IMR-90 (cell line): ENCODE measurements at regions of chr22 and their contacts with region 1.

Region 1: GRCh38 chr22:32175683-32176644 is 16.9 kb upstream of the C22orf42 start:
- DNase-seq: no peak
- ATAC-seq: no peak
- H3K4me3 ChIP-seq: no peak overlapping the region
- H3K27ac ChIP-seq: no peak overlapping the region
- H3K4me1 ChIP-seq: no peaks in the 10 kb centered on the region
- H3K27me3 ChIP-seq: peaks cover 3% of the 10 kb centered on the region; the same call in 1 of the 2 replicates
- CTCF ChIP-seq: no peak
- POLR2A ChIP-seq: no peak
- RAD21 ChIP-seq: no peak

Region 2: GRCh38 chr22:32396746-32397145 is 220.8 kb after region 1 on chr22:
- CTCF ChIA-PET with region 1: no interaction called
- POLR2A ChIA-PET with region 1: interaction called, 14 read pairs
- dilution Hi-C with region 1: no loop called
- in situ Hi-C with region 1: no loop called
- intact Hi-C with region 1: no loop called
- DNase-seq: no peak
- ATAC-seq: no peak
- H3K4me3 ChIP-seq: no peak overlapping the region
- H3K27ac ChIP-seq: no peak overlapping the region
- H3K4me1 ChIP-seq: no peaks in the 10 kb centered on the region
- H3K27me3 ChIP-seq: no peaks in the 10 kb centered on the region
- CTCF ChIP-seq: no peak
- POLR2A ChIP-seq: no peak
- RAD21 ChIP-seq: no peak

Region 3: DNA sequence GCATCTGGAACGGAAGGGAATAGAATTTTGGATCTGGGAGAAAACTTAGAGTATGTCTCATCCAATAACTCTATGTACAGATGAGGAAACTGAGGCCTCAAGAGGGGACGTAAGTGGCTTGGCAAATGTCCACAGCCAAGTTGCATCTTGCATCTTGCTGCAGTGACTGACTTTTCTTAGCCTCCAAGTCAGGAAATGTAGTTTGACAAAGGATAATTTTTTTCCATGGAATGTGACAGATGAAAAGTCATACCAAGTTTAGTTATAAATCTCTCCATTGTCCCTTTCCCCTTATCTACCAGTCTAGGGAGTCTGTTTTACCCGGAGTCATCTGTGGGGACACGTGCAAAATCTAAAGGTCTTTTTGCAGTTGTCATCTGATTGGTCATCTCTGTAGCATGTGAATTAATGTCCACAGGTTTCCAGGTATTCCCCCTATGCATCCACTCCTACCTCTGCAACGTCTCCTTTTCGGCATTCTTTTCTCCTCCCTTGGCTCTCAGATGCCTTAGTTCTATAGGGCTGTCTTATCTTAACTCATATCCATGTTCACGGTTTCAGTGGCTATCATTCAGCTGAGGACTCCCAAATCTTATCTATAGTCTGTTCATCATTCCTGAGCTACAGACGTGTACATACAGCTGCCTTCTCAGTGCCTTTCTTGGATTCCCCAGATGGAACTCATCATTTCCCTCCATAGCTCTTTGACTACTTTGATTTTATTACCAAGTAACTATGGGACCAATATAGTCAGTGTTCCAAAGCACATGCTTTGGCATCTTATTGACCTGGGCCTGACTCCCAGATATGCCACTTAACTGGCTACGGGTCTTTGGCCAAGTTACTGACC is 486.0 kb after region 1 on chr22:
- CTCF ChIA-PET with region 1: no interaction called
- POLR2A ChIA-PET with region 1: no interaction called
- dilution Hi-C with region 1: no loop called
- in situ Hi-C with region 1: no loop called
- intact Hi-C with region 1: no loop called
- DNase-seq: peak; percentile 79
- ATAC-seq: peak; percentile 9; the same call in 1 of the 2 replicates
- H3K4me3 ChIP-seq: no peak overlapping the region
- H3K27ac ChIP-seq: peak overlapping the region; percentile 97
- H3K4me1 ChIP-seq: peaks cover 25% of the 10 kb centered on the region
- H3K27me3 ChIP-seq: no peaks in the 10 kb centered on the region
- CTCF ChIP-seq: no peak
- POLR2A ChIP-seq: no peak
- RAD21 ChIP-seq: no peak

Region 4: GRCh38 chr22:32920032-32920628 is 744.2 kb after region 1 on chr22:
- CTCF ChIA-PET with region 1: no interaction called
- POLR2A ChIA-PET with region 1: no interaction called
- dilution Hi-C with region 1: no loop called
- in situ Hi-C with region 1: no loop called
- intact Hi-C with region 1: loop called (anchors 5 kb)
- DNase-seq: peak; percentile 33
- ATAC-seq: peak; percentile 44
- H3K4me3 ChIP-seq: no peak overlapping the region
- H3K27ac ChIP-seq: no peak overlapping the region
- H3K4me1 ChIP-seq: no peaks in the 10 kb centered on the region; the same call in 1 of the 2 replicates
- H3K27me3 ChIP-seq: peaks cover 44% of the 10 kb centered on the region
- CTCF ChIP-seq: no peak
- POLR2A ChIP-seq: no peak
- RAD21 ChIP-seq: no peak